Left cardiac atrium (tissue), 4 donors: ENCODE measurements at regions of chr13 and their contacts with region 1.

Region 1: DNA sequence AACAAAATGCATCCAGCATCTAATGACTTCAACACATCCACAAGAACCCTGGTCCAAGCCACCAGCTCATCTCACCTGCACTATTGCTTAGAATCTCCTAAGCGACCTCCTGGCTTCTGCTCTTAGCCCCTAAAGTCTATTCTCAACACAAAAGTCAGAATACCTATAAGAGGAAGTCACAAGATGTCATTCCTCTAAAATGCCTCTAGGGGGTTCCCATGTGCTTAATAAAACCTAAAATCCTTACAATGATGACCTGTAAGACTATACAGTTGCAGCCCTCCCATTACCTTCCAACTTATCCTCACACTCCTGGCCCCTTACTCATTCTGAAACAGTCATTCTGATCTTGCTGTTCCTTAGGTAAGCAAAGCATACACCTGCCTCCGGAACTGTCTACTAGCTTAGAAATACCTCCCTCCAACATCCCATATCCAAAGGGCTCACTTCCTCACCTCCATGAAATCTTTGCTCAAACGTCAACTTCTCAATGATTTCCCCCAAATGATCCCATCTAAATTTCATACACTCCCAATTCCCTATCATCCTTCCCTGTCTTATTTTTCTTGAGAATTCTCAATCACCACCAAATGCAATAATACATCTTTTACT is 10.0 kb downstream of the ATP7B start:
- DNase-seq: no peak
- ATAC-seq: peak in 1 of 2 donors; percentile 49

Region 2: DNA sequence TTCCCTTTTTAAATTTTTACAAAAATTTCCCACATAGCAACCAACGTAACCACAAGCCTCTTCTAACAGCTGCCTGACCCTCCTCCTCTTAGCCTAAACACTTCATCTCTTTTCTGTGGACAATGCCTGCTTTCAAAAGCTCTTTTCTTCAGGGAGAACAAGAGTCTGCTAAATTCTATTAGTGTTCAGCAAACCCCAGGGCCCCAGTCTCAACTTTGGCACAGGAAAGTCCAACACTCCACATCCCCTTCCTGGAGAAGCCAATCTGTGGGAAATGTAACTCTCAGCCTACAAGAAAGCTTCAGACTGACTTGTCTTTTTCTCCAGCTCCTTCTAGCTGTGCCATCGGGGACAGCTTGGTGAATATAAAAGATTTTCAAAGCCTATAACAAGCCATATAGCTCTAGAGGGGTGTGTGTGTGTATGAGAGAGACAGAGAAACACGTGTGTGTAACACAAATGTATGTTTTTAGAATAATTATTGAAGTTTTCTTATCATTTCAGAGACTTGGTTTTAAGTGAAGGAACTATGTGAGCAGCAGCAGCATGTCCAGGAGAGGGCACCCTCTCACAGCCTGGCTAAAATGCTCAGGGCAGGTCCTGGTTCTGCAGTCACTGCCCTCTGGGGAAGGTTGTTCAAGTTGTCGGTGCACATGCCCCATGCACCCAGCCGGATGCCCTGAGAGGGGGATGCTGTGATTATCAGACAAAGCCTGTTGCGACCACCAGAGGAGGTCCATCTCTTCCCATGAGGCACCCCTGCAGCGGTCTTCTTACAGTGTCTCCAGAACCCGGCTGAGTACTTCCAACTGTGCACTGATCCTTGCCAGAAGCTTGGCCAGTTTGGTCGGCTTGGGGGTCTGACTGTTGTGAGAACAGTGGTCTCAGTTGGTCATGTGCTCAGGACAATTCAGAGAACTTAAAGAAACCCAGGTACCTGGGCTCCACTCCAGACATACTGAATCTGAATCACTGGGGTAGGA is 105.0 kb before region 1 on chr13:
- intact Hi-C with region 1: loop called in 1 of 2 experiments (anchors 10 kb)
- DNase-seq: peak; percentile 48
- ATAC-seq: peak; percentile 85 to 89